BJ (cell line): ENCODE measurements at regions of chr11 and their contacts with region 1.

Region 1: DNA sequence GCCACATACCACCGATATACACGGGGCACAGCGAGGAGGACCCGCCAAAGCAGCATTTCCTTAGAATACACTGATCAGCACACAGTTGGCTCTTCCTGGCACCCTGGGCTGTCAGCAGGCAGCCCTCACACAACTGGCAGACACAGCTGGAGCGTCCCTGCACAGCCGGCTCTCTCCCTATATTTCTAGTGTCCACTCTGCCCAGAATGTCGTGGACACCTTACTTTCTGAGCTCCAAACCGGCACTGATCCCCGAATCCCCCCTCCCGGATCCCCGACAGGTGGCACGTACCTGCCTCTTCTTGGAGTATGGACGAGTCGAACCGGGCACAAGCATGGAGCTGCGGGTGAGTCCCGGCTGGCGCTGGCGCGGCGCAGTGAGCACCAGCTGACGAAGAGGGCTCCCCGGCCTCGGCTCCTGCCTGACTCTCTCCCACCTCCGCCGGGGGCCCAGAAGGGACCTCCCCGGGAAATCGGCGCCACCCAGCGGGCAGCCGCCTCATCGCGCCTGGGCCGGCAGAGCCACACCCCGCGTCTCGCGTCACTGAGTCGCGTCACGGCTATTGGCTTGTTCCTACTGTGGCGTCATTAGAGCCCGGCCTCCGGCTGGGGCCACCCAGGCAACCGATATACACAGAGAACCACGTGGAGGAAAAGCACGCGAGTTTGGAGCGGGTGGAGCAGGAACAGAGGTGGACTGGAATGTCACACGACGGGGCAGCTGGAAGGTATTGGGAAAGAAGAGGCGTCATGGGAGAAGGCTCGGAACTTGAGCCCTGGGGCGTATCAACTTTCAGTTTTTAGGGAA is at the start of gene USP2:
- DNase-seq: peak; percentile 90
- H3K4me3 ChIP-seq: peak within 1 kb of the TSS; percentile 47
- H3K27me3 ChIP-seq: peaks cover 5% of the 10 kb centered on the region; the same call in 1 of the 2 replicates
- CTCF ChIP-seq: peak; percentile 89
- polyA plus RNA-seq, gene USP2: 0.27 and 0.71 TPM in 2 replicates

Region 2: GRCh38 chr11:119168471-119169281 is 212.7 kb before region 1 on chr11 and contains the start of gene NLRX1:
- CTCF ChIA-PET with region 1: no interaction called
- POLR2A ChIA-PET with region 1: no interaction called
- DNase-seq: peak; percentile 15
- H3K4me3 ChIP-seq: peak within 1 kb of the TSS; percentile 65
- H3K27me3 ChIP-seq: no peaks in the 10 kb centered on the region
- CTCF ChIP-seq: peak; percentile 96
- polyA plus RNA-seq, gene NLRX1: 12.0 and 19.4 TPM in 2 replicates

Region 3: GRCh38 chr11:119262668-119263351 is 118.6 kb before region 1 on chr11:
- CTCF ChIA-PET with region 1: no interaction called
- POLR2A ChIA-PET with region 1: no interaction called
- DNase-seq: no peak
- H3K4me3 ChIP-seq: no peak overlapping the region
- H3K27me3 ChIP-seq: no peaks in the 10 kb centered on the region
- CTCF ChIP-seq: no peak

Region 4: GRCh38 chr11:119363851-119364590 is 17.4 kb before region 1 on chr11:
- CTCF ChIA-PET with region 1: interaction called, 349 read pairs
- POLR2A ChIA-PET with region 1: no interaction called
- DNase-seq: no peak
- H3K4me3 ChIP-seq: peak overlapping the region; percentile 32
- H3K27me3 ChIP-seq: no peaks in the 10 kb centered on the region
- CTCF ChIP-seq: no peak

Region 5: GRCh38 chr11:119403021-119403420 is 21.6 kb after region 1 on chr11:
- CTCF ChIA-PET with region 1: interaction called, 11 read pairs
- POLR2A ChIA-PET with region 1: no interaction called
- DNase-seq: peak; percentile 72
- H3K4me3 ChIP-seq: no peak overlapping the region
- H3K27me3 ChIP-seq: no peaks in the 10 kb centered on the region
- CTCF ChIP-seq: no peak